ENCODE measurements at regions of chr10 and their contacts with region 1.

Region 1: GRCh38 chr10:80498833-80499741 is 38.6 kb upstream of the SH2D4B start:
- DNase-seq: peak; percentile 85 to 92
- ATAC-seq: peak; percentile 91 to 94
- H3K4me3 ChIP-seq: no peak overlapping the region
- H3K27ac ChIP-seq: peak overlapping the region; percentile 74 to 84 (median 80)
- H3K4me1 ChIP-seq: peaks cover 63 to 82% of the 10 kb centered on the region in 2 donors
- H3K27me3 ChIP-seq: no peaks in the 10 kb centered on the region
- CTCF ChIP-seq: peak in 1 of 5 experiments; percentile 11
- POLR2A ChIP-seq: no peak

Region 2: GRCh38 chr10:80382989-80383388 is 116.1 kb before region 1 on chr10:
- in situ Hi-C with region 1: loop called in 2 of 4 experiments (anchors 10 kb)
- intact Hi-C with region 1: loop called (anchors 2 kb)
- DNase-seq: no peak
- ATAC-seq: no peak
- H3K4me3 ChIP-seq: no peak overlapping the region
- H3K27ac ChIP-seq: no peak overlapping the region
- H3K4me1 ChIP-seq: peaks cover 0 to 5% of the 10 kb centered on the region in 2 donors
- H3K27me3 ChIP-seq: no peaks in the 10 kb centered on the region
- CTCF ChIP-seq: peak; percentile 18 to 63 (median 49)
- POLR2A ChIP-seq: no peak

Region 3: DNA sequence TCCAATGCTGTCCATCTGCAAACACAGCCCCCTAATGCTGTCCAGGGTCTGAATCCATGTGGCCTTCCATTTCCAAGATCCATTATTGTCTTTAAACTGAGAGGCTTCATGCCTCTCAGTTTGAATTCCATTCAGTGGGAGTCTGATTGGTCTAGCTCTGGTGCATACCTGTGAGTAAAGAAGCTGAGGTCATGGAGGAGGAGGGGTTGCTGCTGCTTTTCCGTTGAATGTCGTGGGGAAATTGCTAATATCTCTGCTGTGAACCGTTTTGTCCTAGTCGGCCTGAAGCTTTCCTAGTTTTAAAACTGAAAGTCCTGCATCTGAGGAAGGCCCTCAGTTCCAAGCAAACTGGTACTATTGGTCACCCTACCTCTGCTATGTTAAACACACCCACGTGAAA is 56.3 kb after region 1 on chr10:
- in situ Hi-C with region 1: no loop called
- intact Hi-C with region 1: no loop called
- DNase-seq: no peak
- ATAC-seq: no peak
- H3K4me3 ChIP-seq: no peak overlapping the region
- H3K27ac ChIP-seq: no peak overlapping the region
- H3K4me1 ChIP-seq: no peaks in the 10 kb centered on the region
- H3K27me3 ChIP-seq: no peaks in the 10 kb centered on the region
- CTCF ChIP-seq: no peak
- POLR2A ChIP-seq: no peak